Right cardiac atrium (tissue), 5 donors: ENCODE measurements at regions of chr19 and their contacts with region 1.

Region 1: DNA sequence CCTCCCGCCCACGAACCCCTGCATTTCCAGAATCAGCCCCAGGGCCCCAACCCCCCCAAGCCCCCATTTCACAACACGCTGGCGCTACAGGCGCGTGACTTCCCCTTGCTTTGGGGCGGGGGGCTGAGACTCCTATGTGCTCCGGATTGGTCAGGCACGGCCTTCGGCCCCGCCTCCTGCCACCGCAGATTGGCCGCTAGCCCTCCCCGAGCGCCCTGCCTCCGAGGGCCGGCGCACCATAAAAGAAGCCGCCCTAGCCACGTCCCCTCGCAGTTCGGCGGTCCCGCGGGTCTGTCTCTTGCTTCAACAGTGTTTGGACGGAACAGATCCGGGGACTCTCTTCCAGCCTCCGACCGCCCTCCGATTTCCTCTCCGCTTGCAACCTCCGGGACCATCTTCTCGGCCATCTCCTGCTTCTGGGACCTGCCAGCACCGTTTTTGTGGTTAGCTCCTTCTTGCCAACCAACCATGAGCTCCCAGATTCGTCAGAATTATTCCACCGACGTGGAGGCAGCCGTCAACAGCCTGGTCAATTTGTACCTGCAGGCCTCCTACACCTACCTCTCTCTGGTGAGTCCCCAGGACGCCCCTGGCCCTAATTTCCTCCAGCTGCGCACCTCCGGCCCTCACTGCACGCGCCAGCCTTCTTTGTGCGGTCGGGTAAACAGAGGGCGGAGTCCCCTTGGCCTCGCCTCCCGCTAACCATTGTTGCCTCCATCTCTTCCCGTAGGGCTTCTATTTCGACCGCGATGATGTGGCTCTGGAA is at the start of gene FTL:
- DNase-seq: peak; percentile 98 to 99 (median 99)
- ATAC-seq: peak; percentile 87 to 90
- H3K4me3 ChIP-seq: peak within 1 kb of the TSS; percentile 69
- H3K27ac ChIP-seq: peak within 1 kb of the TSS; percentile 86
- H3K4me1 ChIP-seq: peaks cover 11% of the 10 kb centered on the region
- H3K27me3 ChIP-seq: no peaks in the 10 kb centered on the region
- total RNA-seq, gene FTL: 1,459 to 1,840 (median 1,541) TPM

Region 2: GRCh38 chr19:48872182-48872883 is 92.9 kb before region 1 on chr19 and contains the start of gene PPP1R15A:
- intact Hi-C with region 1: loop called in 1 of 4 experiments (anchors 10 kb)
- DNase-seq: peak; percentile 97 to 99 (median 99)
- ATAC-seq: peak; percentile 72 to 80
- H3K4me3 ChIP-seq: peak within 1 kb of the TSS; percentile 71
- H3K27ac ChIP-seq: peak within 1 kb of the TSS; percentile 98
- H3K4me1 ChIP-seq: no peaks in the 10 kb centered on the region
- H3K27me3 ChIP-seq: no peaks in the 10 kb centered on the region
- total RNA-seq, gene PPP1R15A: 60.8 to 80.2 (median 70.9) TPM